Ascending aorta (tissue), 2 donors: ENCODE measurements at regions of chr16 and their contacts with region 1.

Region 1: GRCh38 chr16:61432421-61432820 is 603.8 kb downstream of the CDH8 start:
- DNase-seq: no peak
- H3K4me3 ChIP-seq: no peak overlapping the region
- H3K27ac ChIP-seq: no peak overlapping the region
- H3K4me1 ChIP-seq: no peaks in the 10 kb centered on the region
- H3K27me3 ChIP-seq: no peaks in the 10 kb centered on the region
- CTCF ChIP-seq: peak in 1 of 3 experiments; percentile 47

Region 2: DNA sequence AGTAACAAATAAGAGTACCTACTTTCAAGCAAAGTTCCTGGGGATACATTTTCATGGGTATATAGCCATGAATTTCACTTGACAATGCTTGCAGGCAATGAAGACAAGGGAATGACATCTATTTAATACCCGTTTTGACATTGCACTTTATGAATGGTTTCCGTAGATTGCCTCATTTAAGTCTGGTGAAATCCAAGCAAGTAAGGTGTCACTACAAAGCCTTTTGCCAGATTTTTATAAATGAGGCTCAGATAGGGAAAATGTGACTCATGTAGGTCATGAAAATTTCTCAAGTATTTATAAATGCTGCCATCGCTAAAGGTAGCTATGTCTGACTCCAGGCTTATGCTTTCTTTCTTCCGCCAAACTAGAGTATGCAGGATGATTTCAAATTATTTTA is 40.5 kb before region 1 on chr16:
- intact Hi-C with region 1: no loop called
- DNase-seq: no peak
- H3K4me3 ChIP-seq: no peak overlapping the region
- H3K27ac ChIP-seq: no peak overlapping the region
- H3K4me1 ChIP-seq: no peaks in the 10 kb centered on the region
- H3K27me3 ChIP-seq: no peaks in the 10 kb centered on the region
- CTCF ChIP-seq: no peak

Region 3: DNA sequence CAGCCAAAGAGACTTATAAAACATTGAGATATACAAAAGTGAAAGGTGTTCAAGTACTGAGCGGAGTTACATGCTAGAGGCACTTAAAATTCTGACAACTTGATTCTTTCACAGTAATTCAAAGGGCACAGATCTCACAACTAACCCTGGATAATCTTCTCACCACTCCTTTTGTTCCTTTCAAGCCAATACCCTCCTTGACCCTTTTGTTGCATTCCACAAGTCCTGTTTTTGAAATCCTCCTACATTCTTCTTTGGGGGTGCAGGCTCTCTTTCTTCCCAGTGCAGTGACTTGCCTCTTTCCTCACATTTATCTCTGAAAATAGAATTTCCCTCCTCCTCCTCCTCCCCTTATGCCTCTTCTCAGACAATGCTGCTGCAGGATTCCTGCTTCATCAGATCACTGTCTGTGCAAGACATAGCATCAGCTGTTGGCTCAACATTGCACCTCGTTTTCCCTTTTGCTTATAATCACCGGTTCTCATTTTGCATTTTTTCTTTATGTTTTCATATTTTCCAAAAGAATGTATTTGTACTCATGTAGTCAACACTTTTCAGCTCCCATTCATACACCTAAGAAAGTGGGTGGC is 404.5 kb after region 1 on chr16:
- intact Hi-C with region 1: no loop called
- DNase-seq: no peak
- H3K4me3 ChIP-seq: no peak overlapping the region
- H3K27ac ChIP-seq: no peak overlapping the region
- H3K4me1 ChIP-seq: no peaks in the 10 kb centered on the region
- H3K27me3 ChIP-seq: no peaks in the 10 kb centered on the region
- CTCF ChIP-seq: no peak

Region 4: GRCh38 chr16:61900482-61900881 is 468.1 kb after region 1 on chr16:
- intact Hi-C with region 1: loop called (anchors 10 kb)
- DNase-seq: no peak
- H3K4me3 ChIP-seq: no peak overlapping the region
- H3K27ac ChIP-seq: no peak overlapping the region
- H3K4me1 ChIP-seq: no peaks in the 10 kb centered on the region
- H3K27me3 ChIP-seq: no peaks in the 10 kb centered on the region
- CTCF ChIP-seq: no peak

Region 5: DNA sequence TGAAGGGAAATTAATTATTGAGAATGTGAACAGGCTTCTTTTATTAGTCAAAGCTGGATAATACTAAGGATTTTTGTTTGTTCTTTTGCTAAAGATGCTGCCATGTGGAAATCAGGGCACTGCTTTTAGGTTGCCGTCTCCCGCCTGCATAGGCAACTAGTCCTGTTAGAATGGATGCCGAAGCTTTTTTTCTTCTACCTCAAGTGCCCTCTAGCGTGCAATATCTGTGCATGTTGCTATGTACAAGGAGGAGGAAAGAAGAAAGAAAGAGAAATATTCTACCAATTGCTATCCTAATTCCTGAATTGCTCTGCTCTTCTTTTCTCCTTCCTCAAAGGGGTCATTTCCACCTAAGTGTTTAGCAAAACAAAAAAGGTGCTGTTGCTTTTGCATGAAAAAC is 609.0 kb after region 1 on chr16:
- intact Hi-C with region 1: loop called (anchors 2 kb)
- DNase-seq: no peak
- H3K4me3 ChIP-seq: no peak overlapping the region
- H3K27ac ChIP-seq: no peak overlapping the region
- H3K4me1 ChIP-seq: peaks cover 0 to under 1% of the 10 kb centered on the region in 2 donors
- H3K27me3 ChIP-seq: no peaks in the 10 kb centered on the region
- CTCF ChIP-seq: peak in 2 of 3 experiments; percentile 39 to 57